ENCODE measurements at regions of chr17 and their contacts with region 1.

Region 1: GRCh38 chr17:48024937-48025906 is 12.4 kb downstream of the COPZ2 start:
- H3K4me3 Mint-ChIP-seq: peak overlapping the region; percentile 86
- H3K27ac Mint-ChIP-seq: peak overlapping the region; percentile 96
- H3K4me1 Mint-ChIP-seq: peaks cover 52% of the 10 kb centered on the region
- H3K27me3 Mint-ChIP-seq: peaks cover 15% of the 10 kb centered on the region

Region 2: GRCh38 chr17:48002266-48002915 is 22.8 kb before region 1 on chr17:
- intact Hi-C with region 1: no loop called
- H3K4me3 Mint-ChIP-seq: peak overlapping the region; percentile 57
- H3K27ac Mint-ChIP-seq: peak overlapping the region; percentile 83
- H3K4me1 Mint-ChIP-seq: peaks cover 80% of the 10 kb centered on the region
- H3K27me3 Mint-ChIP-seq: no peaks in the 10 kb centered on the region

Region 3: DNA sequence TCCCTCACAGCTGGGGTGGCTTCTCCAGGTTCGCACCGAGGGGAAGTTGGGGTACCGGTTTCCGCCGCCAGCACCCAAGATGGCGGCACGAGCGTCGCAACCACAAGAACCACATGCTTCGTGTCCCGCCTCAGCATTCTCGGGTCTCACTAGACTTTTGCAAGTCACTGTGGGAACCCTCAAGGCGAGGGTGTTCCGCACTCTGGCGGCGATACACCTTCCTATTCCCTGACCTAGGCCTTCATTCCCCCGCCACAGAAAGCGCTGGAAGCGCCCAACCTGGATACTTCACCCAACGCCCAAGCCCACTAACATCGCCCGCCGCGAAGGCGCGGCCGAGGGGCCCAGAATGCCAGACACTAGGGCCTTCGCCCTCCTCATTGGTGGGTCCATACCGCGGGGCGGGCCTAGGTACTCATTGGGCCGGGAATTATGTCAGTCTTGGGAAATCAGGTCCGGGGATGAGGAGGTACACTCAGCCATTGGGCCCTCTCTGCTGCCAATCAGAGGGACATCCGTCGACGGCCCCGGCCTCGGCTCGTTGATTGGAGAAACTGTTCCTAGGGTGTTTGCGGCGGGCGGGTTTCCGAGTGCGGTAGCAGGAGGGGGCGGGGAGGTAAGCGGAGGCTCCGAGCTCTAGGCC is 22.6 kb after region 1 on chr17 and contains the start of gene NFE2L1:
- intact Hi-C with region 1: loop called (anchors 1 kb)
- H3K4me3 Mint-ChIP-seq: peak within 1 kb of the TSS; percentile 85
- H3K27ac Mint-ChIP-seq: peak within 1 kb of the TSS; percentile 95
- H3K4me1 Mint-ChIP-seq: peaks cover 59% of the 10 kb centered on the region
- H3K27me3 Mint-ChIP-seq: peaks cover under 1% of the 10 kb centered on the region

Region 4: DNA sequence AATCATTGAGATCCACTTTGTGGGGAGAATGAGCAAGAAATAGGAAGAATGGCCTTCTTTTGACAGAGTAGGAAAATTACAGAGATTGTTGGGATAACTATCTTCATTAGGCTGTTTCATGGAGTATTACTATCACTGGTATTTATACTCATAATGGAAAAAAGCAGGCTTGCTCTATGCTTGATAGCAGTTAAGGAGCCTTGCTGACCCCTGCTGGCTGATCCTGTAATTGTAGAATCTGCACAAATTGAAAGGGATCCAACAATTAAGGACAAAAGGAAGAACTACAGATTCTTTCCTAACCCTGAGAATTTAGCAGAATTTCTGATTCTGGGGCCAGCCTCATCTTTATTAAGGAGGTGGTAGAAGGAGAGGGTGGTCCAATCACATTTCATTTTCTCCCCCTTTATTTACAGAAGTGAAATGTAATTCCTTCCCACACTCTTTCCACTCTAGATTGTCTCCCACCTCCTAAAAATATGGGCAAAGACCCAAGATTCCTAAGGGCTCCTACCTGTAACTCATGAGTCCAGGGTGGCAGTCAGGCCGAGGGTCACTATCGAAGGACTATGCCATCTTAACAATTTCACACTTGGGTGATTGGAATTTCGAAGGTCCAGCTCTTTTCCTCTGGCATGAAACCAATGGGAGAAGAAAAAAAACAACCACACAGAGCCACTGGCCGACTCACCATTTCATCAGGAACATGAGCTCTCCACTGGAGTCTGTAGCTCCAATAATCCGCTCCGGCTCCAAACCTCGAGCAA is 49.3 kb after region 1 on chr17:
- intact Hi-C with region 1: loop called (anchors 1 kb)
- H3K4me3 Mint-ChIP-seq: no peak overlapping the region
- H3K27ac Mint-ChIP-seq: no peak overlapping the region
- H3K4me1 Mint-ChIP-seq: no peaks in the 10 kb centered on the region
- H3K27me3 Mint-ChIP-seq: no peaks in the 10 kb centered on the region

Region 5: GRCh38 chr17:48131216-48131824 is 106.1 kb after region 1 on chr17:
- intact Hi-C with region 1: loop called (anchors 1 kb)
- H3K4me3 Mint-ChIP-seq: no peak overlapping the region
- H3K27ac Mint-ChIP-seq: peak overlapping the region; percentile 72
- H3K4me1 Mint-ChIP-seq: peaks cover 13% of the 10 kb centered on the region
- H3K27me3 Mint-ChIP-seq: no peaks in the 10 kb centered on the region

Region 6: DNA sequence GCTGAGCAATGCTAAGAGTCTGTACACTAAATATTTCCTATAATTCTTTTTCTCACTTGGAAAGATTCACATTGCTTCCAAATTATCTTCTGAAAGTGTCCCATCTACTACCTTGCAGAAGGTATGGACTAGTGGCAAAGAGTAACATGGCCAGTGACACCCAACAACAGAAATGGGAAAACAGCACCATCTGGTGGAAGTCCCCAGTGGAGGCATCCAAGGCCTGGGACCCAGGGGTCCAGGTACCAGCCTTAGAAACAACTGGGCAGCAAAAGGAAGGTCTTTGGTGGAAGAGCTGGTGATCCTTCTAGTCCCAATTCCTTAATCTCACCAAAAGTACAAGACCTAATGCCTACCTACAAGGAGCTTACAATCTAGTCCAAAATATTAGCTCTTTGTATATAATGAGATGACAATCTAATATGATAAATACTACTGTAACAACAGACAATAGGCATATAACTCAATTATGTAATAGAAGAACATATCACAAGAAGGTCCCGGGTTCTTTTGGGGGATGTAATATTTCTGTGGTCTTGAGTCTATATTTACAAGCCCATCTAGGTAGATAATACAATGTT is 349.5 kb after region 1 on chr17:
- intact Hi-C with region 1: loop called (anchors 10 kb)
- H3K4me3 Mint-ChIP-seq: no peak overlapping the region
- H3K27ac Mint-ChIP-seq: no peak overlapping the region
- H3K4me1 Mint-ChIP-seq: no peaks in the 10 kb centered on the region
- H3K27me3 Mint-ChIP-seq: peaks cover 13% of the 10 kb centered on the region

Region 7: GRCh38 chr17:48618256-48618897 is 593.2 kb after region 1 on chr17:
- intact Hi-C with region 1: loop called (anchors 10 kb)
- H3K4me3 Mint-ChIP-seq: no peak overlapping the region
- H3K27ac Mint-ChIP-seq: no peak overlapping the region
- H3K4me1 Mint-ChIP-seq: peaks cover 16% of the 10 kb centered on the region
- H3K27me3 Mint-ChIP-seq: peaks cover 99% of the 10 kb centered on the region

Measured in dendritic cell treated with granulocyte-macrophage colony-stimulating factor and Interleukin-4, amounts not matched to agents 40 ng/mL and 50 ng/mL, for 4 days (primary cell).